ENCODE measurements at regions of chr2 and their contacts with region 1.

Region 1: DNA sequence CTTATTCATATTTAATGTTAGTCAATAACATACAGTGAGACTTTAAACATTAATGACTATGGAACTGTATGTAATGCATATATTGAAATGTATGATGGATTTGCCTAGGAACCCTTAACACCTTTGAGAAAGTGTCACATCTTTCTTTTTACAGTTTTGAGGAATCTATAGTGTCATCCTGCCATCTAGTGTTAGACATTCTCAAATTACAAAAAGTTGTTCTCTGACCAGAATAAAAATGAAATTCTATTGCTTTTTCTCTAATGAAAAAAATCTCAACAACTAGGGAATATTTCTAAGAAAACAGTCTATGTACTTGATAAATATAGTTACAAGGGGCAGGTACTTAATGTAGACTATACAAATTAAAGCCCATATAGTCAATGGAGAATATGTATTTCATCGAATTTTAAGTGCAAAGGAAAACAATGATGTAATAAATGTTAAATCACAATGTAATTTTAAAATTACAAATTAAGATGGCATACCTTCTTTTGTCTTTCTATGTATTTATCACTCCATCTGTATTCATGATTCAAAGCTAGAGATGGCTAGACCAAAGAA is 5.1 kb upstream of the CALCRL start:
- DNase-seq: no peak
- H3K4me3 ChIP-seq: no peak overlapping the region
- H3K27ac ChIP-seq: no peak overlapping the region
- H3K4me1 ChIP-seq: no peaks in the 10 kb centered on the region
- CTCF ChIP-seq: peak; percentile 69

Region 2: GRCh38 chr2:186862869-186863709 is 590.1 kb before region 1 on chr2:
- CTCF ChIA-PET with region 1: no interaction called
- POLR2A ChIA-PET with region 1: no interaction called
- intact Hi-C with region 1: loop called (anchors 5 kb)
- DNase-seq: peak; percentile 19
- H3K4me3 ChIP-seq: no peak overlapping the region
- H3K27ac ChIP-seq: no peak overlapping the region
- H3K4me1 ChIP-seq: no peaks in the 10 kb centered on the region
- CTCF ChIP-seq: peak; percentile 81

Region 3: DNA sequence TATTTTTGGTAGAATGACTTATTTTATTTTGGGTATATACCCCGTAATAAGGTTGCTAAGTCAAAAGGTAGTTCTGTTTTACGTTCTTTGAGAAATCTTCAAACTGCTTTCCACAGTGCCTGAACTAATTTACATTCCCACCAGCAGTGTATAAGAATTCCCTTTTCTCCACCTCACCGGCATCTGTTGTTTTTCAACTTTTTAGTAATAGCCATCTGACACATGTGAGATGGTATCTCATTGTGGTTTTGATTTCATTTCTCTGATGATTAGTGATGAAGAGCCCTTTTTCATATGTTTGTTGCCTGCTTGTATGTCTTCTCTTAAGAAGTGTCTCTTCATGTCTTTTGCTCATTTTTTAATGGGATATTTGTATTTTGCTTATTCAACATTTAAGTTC is 316.3 kb after region 1 on chr2:
- CTCF ChIA-PET with region 1: no interaction called
- POLR2A ChIA-PET with region 1: no interaction called
- intact Hi-C with region 1: no loop called
- DNase-seq: no peak
- H3K4me3 ChIP-seq: no peak overlapping the region
- H3K27ac ChIP-seq: no peak overlapping the region
- H3K4me1 ChIP-seq: no peaks in the 10 kb centered on the region
- CTCF ChIP-seq: no peak